ENCODE measurements at regions of chr6 and their contacts with region 1.

Region 1: DNA sequence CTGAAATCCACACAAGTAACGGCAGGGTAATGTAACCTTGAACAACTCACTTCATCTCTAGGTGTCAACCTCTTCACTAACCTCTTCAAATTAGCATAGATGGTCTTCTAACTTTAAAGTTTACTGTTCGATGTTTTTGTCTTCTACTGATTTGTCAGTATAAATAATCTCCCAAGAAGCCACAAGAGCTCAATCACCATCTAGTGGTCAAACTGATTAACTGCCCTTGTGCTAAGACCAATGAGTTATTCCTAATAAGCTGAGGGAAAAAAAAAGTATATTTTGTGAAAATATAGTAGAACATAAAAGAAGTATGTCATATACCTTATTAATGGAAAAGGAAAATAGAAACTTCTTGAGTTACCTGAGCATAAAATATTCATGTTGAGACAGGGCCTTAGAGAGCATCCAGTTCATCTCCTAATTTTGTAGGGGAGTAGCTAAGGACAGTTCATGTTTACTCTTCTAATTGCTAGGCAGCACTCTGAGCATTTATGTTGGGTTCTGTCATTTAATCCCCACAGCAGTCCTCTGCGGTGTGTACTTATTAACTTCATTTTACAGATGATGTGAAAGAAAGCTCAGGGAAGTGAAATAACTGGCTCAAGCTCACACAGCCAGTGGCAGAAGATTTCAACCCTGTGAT is 317.1 kb downstream of the ESR1 start:
- DNase-seq: no peak

Region 2: GRCh38 chr6:151765444-151765886 is 359.1 kb before region 1 on chr6:
- intact Hi-C with region 1: loop called (anchors 2 kb)
- DNase-seq: no peak

Region 3: GRCh38 chr6:153140299-153140698 is 1015.7 kb after region 1 on chr6:
- intact Hi-C with region 1: no loop called
- DNase-seq: no peak